HCT116 (cell line): ENCODE measurements at regions of chr5 and their contacts with region 1.

Region 1: GRCh38 chr5:131423056-131423455 is 159.2 kb downstream of the CDC42SE2 start:
- DNase-seq: no peak
- ATAC-seq: peak; percentile 77
- H3K4me3 ChIP-seq: no peak overlapping the region
- H3K27ac ChIP-seq: no peak overlapping the region
- H3K4me1 ChIP-seq: no peaks in the 10 kb centered on the region
- H3K27me3 ChIP-seq: no peaks in the 10 kb centered on the region
- CTCF ChIP-seq: peak; percentile 24 to 61 (median 60); a peak in 5 of 6 replicates
- POLR2A ChIP-seq: no peak
- RAD21 ChIP-seq: peak; percentile 66

Region 2: DNA sequence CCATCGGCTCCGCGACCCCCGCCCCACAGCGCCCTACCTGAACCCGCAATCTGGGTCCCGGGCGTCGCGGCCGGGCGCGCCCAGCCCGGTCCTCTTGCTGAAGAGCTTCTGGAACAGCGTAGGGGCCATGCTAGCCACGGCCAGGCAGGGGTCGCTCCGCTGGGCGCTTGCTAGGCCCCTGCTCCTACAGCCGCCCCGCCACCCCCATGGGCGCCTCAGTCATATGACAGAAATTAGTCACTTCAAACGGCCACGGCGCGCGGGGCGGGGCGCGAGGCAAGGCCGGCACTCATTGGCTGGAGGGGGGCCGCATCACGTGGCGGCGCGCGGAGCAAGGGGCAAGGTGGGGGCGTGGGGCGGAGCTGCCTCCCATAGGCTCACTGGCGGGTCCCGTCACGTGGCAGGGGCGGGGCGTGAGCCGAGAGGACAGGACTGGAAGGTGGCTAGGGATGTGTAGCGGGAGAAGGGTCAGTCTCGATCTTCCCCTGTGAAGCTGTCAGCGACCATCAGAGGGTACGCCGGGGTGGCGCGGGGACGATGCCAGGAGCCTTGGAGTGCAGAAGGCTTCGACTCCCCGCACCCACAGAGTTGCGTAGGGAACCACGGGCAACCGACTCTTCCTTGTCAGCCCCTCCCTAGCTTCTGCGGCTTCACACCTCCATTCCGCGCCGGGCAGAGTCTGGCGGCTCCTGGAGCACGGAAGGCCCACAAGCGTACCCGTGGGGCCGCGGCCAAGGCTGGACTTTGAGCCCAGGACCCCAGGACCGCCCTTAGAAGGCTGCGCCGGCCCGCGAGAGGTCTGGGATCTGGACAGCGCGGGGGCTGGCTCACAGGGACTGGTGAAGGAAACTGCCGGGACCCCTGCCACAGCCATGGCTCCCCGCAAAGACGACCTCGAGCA is 374.0 kb after region 1 on chr5 and contains the start of gene FNIP1:
- CTCF ChIA-PET with region 1: no interaction called
- POLR2A ChIA-PET with region 1: no interaction called
- RAD21 ChIA-PET with region 1: no interaction called
- intact Hi-C with region 1: loop called (anchors 5 kb)
- DNase-seq: peak; percentile 85
- ATAC-seq: peak; percentile 95
- H3K4me3 ChIP-seq: peak within 1 kb of the TSS; percentile 90 to 95
- H3K27ac ChIP-seq: peak within 1 kb of the TSS; percentile 71
- H3K4me1 ChIP-seq: peaks cover 4 to 18% of the 10 kb centered on the region in 2 experiments; a peak in 3 of 4 replicates
- H3K27me3 ChIP-seq: no peaks in the 10 kb centered on the region
- CTCF ChIP-seq: no peak
- POLR2A ChIP-seq: peak; percentile 64
- RAD21 ChIP-seq: no peak
- total RNA-seq, gene FNIP1: 16.4 TPM

Region 3: GRCh38 chr5:131944702-131945550 is 521.9 kb after region 1 on chr5:
- CTCF ChIA-PET with region 1: no interaction called
- POLR2A ChIA-PET with region 1: no interaction called
- RAD21 ChIA-PET with region 1: no interaction called
- intact Hi-C with region 1: no loop called
- DNase-seq: no peak
- ATAC-seq: no peak
- H3K4me3 ChIP-seq: no peak overlapping the region
- H3K27ac ChIP-seq: no peak overlapping the region
- H3K4me1 ChIP-seq: no peaks in the 10 kb centered on the region
- H3K27me3 ChIP-seq: no peaks in the 10 kb centered on the region
- CTCF ChIP-seq: no peak
- POLR2A ChIP-seq: no peak
- RAD21 ChIP-seq: no peak

Region 4: DNA sequence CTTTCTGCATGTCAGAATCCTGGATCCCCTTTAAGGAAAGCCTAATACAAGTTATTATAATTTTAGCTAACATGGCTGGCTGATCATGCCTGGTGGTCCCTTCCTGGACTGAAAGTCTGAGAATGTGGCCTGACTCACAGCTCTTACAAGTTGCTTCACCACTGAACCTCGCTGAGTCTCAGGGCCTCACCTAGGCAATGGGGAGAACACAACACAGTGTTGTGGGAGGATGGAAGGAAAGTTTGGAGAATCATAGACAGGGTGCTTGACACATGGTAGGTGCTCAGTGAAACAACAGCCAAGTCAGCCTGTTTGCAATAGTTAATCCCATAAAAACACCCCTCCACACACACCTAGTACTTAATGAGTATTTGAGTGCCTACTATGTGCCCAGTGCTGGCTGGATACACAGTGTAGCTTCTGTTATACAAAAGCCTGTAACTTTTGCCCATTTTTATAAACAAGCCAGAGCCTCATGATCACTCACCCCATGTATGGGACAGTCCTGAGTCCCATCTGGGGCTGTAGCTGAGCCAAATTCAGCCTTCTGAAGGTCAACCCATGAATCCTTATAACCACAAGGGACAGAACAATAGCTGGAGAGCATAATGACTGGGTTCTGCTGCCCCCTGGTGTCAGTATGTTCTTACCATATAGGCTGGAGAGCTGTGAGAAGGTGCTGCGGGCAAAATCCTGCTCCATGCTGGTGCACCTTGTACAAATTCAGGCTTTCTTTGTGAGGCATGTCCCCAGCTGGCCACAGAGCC is 584.5 kb after region 1 on chr5:
- CTCF ChIA-PET with region 1: interaction called, 21 read pairs
- POLR2A ChIA-PET with region 1: no interaction called
- RAD21 ChIA-PET with region 1: interaction called in 1 of 2 experiments, 4 read pairs
- intact Hi-C with region 1: loop called (anchors 1 kb)
- DNase-seq: peak; percentile 72
- ATAC-seq: peak; percentile 84
- H3K4me3 ChIP-seq: no peak overlapping the region
- H3K27ac ChIP-seq: no peak overlapping the region
- H3K4me1 ChIP-seq: peaks cover 0 to 7% of the 10 kb centered on the region in 2 experiments; a peak in 2 of 4 replicates
- H3K27me3 ChIP-seq: no peaks in the 10 kb centered on the region
- CTCF ChIP-seq: peak; percentile 74 to 88 (median 74)
- POLR2A ChIP-seq: no peak
- RAD21 ChIP-seq: peak; percentile 95